GM23248 (cell line): ENCODE measurements at regions of chr1 and their contacts with region 1.

Region 1: DNA sequence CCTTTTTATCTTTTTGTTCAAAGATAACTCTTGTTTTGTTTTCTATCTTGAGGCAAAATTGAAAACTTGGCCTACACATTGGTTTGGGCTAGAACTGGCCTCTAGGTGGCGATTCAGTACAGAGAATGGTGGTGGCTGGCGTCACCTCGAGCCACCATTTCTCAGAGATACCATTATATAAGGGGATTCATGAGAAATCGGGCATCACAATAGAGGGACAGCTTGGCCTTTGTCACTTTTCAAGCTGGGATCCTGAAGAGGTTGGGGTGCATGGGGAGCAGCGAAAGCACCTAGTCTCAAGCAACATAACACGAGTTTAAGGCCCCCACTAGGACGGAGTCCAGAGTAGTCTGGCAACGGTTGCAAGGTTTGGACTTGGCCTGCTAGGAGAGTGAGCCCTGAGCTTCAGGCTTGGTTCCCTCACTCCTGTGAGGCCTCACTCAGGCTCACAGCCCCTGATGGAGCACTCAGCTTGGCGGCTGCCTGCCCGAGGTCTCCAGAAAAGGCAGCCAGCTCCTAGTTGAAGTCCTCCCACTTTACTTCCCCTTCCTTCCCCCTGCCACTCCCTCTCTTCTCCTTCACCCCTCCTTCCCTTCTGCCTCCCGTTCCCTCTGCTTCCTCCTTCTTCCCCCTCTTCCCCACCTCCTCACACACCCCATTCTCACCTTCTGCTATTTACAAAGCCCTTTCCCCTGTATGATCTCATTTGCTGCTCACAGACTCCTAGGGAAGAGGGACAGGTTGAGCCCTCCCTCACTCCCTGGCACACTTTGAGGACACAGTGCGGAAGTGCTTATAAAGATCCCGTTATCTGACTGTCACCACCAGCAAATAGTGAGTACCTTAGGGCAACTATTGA is 67.8 kb downstream of the LRIG2 start:
- DNase-seq: peak; percentile 87
- H3K4me3 ChIP-seq: no peak overlapping the region
- H3K27ac ChIP-seq: peak overlapping the region; percentile 55
- H3K4me1 ChIP-seq: peaks cover 28% of the 10 kb centered on the region
- H3K27me3 ChIP-seq: no peaks in the 10 kb centered on the region

Region 2: GRCh38 chr1:113396585-113396984 is 255.8 kb after region 1 on chr1:
- in situ Hi-C with region 1: no loop called
- DNase-seq: peak; percentile 90
- H3K4me3 ChIP-seq: peak overlapping the region; percentile 19; the same call in 1 of the 2 replicates
- H3K27ac ChIP-seq: no peak overlapping the region
- H3K4me1 ChIP-seq: peaks cover 39% of the 10 kb centered on the region
- H3K27me3 ChIP-seq: no peaks in the 10 kb centered on the region

Region 3: GRCh38 chr1:113684153-113684541 is 543.3 kb after region 1 on chr1:
- in situ Hi-C with region 1: loop called (anchors 10 kb)
- DNase-seq: peak; percentile 66
- H3K4me3 ChIP-seq: no peak overlapping the region
- H3K27ac ChIP-seq: peak overlapping the region; percentile 51
- H3K4me1 ChIP-seq: peaks cover 17% of the 10 kb centered on the region
- H3K27me3 ChIP-seq: no peaks in the 10 kb centered on the region

Region 4: GRCh38 chr1:113928941-113929749 is 788.3 kb after region 1 on chr1 and contains the start of gene HIPK1:
- in situ Hi-C with region 1: loop called (anchors 25 kb)
- DNase-seq: peak; percentile 97
- H3K4me3 ChIP-seq: peak within 1 kb of the TSS; percentile 84
- H3K27ac ChIP-seq: peak within 1 kb of the TSS; percentile 99
- H3K4me1 ChIP-seq: peaks cover 24% of the 10 kb centered on the region
- H3K27me3 ChIP-seq: no peaks in the 10 kb centered on the region
- total RNA-seq, gene HIPK1: 23.6 and 26.2 TPM in 2 replicates